ENCODE measurements at regions of chr12 and their contacts with region 1.

Region 1: DNA sequence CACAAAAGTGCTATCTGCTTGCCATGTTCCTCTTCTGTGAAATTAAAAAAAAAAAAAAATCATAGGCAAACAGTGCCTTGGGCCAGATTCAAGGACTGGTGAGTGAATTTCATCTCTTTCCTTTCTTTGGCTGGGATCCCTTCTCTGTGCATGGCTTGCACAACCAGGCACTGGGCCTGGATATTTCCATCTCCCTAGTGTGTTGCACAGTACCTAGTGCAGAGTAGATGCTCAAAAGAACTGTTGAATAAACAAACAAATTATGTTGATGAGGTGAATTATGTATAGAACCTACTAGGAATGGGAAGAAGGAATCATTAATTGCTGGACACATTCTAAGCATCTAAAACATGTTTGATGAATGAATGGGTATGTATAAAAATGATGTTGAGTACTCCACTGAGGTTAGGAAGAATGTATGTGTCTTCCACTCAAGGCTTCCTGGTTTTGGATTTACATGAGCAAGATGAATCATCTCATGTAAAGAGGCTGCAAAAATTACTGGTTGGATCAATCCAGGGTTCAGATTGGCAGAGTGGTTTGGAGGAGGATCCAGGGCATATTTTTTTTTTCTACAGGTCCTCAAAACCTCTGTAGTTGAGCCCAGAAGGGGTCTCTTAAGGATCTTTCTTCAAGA is 93.2 kb downstream of the EMP1 start:
- DNase-seq: no peak
- H3K4me3 ChIP-seq: no peak overlapping the region
- H3K27ac ChIP-seq: no peak overlapping the region
- H3K4me1 ChIP-seq: no peaks in the 10 kb centered on the region
- H3K27me3 ChIP-seq: no peaks in the 10 kb centered on the region; the same call in 1 of the 2 replicates
- CTCF ChIP-seq: no peak
- EP300 ChIP-seq: no peak
- RAD21 ChIP-seq: no peak

Region 2: DNA sequence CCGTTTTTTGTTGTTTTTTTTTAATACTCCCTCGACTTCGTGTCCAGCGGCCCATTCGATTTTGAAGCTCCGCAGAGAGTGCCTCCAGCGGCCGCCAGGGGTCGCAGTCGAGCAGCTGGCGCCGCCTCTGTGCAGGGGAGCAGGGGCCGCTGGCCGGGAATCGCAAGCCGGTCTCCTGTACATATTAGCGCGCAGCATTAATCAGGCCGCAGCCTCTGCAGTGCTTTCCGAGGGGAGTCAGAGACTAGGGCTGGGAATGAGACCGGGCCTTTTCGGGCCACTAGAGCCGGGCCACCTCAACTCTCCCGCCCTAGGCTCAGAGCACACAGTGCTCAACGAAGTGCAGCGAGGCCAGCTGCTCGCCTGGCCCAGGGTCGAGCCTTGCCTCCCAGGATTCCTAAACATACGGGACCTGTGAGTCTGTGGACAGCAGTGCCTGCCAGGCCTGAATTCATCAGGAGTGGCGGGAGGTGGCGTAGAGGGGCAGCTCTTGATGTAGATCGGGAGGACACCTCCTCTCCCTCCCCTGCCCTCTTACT is 11.5 kb before region 1 on chr12:
- CTCF ChIA-PET with region 1: interaction called, 12 read pairs
- POLR2A ChIA-PET with region 1: no interaction called
- DNase-seq: peak; percentile 87
- H3K4me3 ChIP-seq: peak overlapping the region in 1 of 2 experiments; percentile 62; a peak in 1 of 4 replicates
- H3K27ac ChIP-seq: no peak overlapping the region
- H3K4me1 ChIP-seq: peaks cover 0 to 4% of the 10 kb centered on the region in 2 experiments; a peak in 1 of 4 replicates
- H3K27me3 ChIP-seq: peaks cover 47% of the 10 kb centered on the region; the same call in 1 of the 2 replicates
- CTCF ChIP-seq: peak; percentile 97
- EP300 ChIP-seq: no peak
- RAD21 ChIP-seq: peak; percentile 73

Measured in SK-N-SH (cell line).